ENCODE measurements at regions of chr7 and their contacts with region 1.

Region 1: GRCh38 chr7:88111136-88111743 is 108.6 kb downstream of the SRI start:
- DNase-seq: peak in 1 of 2 experiments; percentile 24
- H3K4me3 ChIP-seq: no peak overlapping the region
- H3K4me3 Mint-ChIP-seq: no peak overlapping the region
- H3K27ac Mint-ChIP-seq: no peak overlapping the region
- H3K4me1 ChIP-seq: no peaks in the 10 kb centered on the region
- H3K4me1 Mint-ChIP-seq: no peaks in the 10 kb centered on the region
- H3K27me3 ChIP-seq: no peaks in the 10 kb centered on the region
- H3K27me3 Mint-ChIP-seq: no peaks in the 10 kb centered on the region
- CTCF ChIP-seq: peak; percentile 34 to 63

Region 2: GRCh38 chr7:87910138-87910537 is 201.1 kb before region 1 on chr7:
- CTCF ChIA-PET with region 1: no interaction called
- POLR2A ChIA-PET with region 1: no interaction called
- intact Hi-C with region 1: loop called (anchors 5 kb)
- DNase-seq: no peak
- H3K4me3 ChIP-seq: no peak overlapping the region
- H3K4me3 Mint-ChIP-seq: no peak overlapping the region
- H3K27ac Mint-ChIP-seq: no peak overlapping the region
- H3K4me1 ChIP-seq: peaks cover 19% of the 10 kb centered on the region
- H3K4me1 Mint-ChIP-seq: peaks cover 7% of the 10 kb centered on the region
- H3K27me3 ChIP-seq: no peaks in the 10 kb centered on the region
- H3K27me3 Mint-ChIP-seq: no peaks in the 10 kb centered on the region
- CTCF ChIP-seq: no peak

Measured in Caco-2 (cell line).